ENCODE measurements at regions of chr2 and their contacts with region 1.

Region 1: DNA sequence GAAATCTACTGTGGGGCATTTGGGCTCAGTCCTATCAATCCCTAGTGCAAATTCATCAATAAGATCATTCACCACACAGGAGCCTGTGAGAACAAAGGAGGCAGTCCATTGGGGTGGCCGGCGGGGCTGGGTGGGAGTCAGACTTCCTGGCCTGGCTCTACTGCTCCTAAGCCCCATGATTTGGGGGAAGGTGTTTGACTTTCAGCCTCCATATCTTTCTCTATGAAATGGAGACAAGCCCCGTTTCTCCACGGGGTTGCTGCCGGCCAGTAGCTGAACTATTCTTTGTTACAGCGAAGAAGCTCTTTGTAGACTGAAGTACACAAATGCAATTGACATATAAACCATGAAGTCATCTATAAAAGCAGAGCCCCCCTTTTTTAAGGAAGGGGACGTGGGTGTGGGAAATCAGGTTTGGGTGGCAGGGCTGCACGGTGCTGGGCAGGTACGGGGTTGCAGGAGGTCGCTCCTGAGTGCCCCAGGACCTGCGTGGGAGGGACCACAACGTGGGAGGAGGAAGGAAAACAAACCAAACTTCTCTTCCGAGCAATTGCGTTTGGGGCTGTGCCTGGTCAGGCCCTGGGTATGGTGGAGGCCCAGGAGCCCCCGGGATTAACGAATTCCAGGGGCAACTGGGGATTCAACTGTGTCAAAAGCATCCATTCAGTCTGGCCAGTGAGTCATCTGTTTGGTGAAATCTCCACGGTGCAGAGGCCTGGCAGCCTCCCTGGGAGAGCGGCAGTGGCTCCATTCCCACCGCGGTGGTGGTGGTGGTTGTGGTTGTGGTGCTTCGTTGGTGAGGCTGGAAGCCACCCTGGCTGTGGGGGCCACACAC is 18.2 kb downstream of the FBLN7 start:
- DNase-seq: peak; percentile 69
- ATAC-seq: peak; percentile 47
- H3K4me3 Mint-ChIP-seq: peak overlapping the region; percentile 46
- H3K27ac Mint-ChIP-seq: peak overlapping the region; percentile 88
- H3K4me1 Mint-ChIP-seq: peaks cover 49% of the 10 kb centered on the region
- H3K27me3 Mint-ChIP-seq: no peaks in the 10 kb centered on the region

Region 2: GRCh38 chr2:111986116-111986900 is 170.1 kb before region 1 on chr2:
- CTCF ChIA-PET with region 1: no interaction called
- POLR2A ChIA-PET with region 1: no interaction called
- intact Hi-C with region 1: no loop called
- DNase-seq: no peak
- ATAC-seq: no peak
- H3K4me3 Mint-ChIP-seq: no peak overlapping the region
- H3K27ac Mint-ChIP-seq: no peak overlapping the region
- H3K4me1 Mint-ChIP-seq: peaks cover 15% of the 10 kb centered on the region
- H3K27me3 Mint-ChIP-seq: no peaks in the 10 kb centered on the region

Region 3: DNA sequence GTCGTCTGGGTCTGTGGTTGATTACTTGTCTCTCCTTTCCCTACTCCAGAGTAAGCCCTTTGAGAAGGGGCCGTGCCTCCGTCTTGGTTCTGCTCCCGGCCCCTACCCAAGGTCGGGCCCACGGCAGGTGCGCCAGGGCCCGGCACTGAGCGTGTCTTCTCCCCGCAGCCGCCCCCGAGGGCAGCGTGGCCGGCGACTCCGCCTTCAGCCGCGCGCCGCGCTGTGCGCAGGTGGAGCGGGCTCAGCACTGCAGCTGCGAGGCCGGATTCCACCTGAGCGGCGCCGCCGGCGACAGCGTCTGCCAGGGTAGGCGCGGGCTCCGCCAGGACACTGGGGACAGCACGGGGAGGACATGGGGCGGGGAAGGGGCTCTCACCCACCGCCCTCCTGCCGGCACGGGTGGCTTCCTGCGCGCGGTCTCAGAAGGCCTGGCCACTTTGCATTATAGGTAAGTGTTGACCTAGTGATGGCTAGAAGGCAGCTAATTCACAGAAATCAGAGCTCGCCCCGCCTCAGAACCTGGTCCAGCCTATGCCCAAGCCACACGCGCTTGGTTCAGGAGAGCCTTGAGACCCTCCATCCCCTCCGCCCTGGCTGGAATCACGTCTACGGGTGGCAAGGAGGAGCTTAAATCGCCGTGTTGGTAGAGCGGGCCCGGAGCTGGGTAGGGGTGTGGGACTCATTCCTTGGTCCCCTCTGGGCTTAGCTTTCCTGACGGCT is 25.4 kb after region 1 on chr2:
- CTCF ChIA-PET with region 1: no interaction called
- POLR2A ChIA-PET with region 1: no interaction called
- intact Hi-C with region 1: loop called (anchors 1 to 2 kb)
- DNase-seq: peak; percentile 84
- ATAC-seq: peak; percentile 67
- H3K4me3 Mint-ChIP-seq: peak overlapping the region; percentile 88
- H3K27ac Mint-ChIP-seq: peak overlapping the region; percentile 91
- H3K4me1 Mint-ChIP-seq: peaks cover 69% of the 10 kb centered on the region
- H3K27me3 Mint-ChIP-seq: no peaks in the 10 kb centered on the region

Region 4: GRCh38 chr2:112301171-112301584 is 144.8 kb after region 1 on chr2:
- CTCF ChIA-PET with region 1: no interaction called
- POLR2A ChIA-PET with region 1: no interaction called
- intact Hi-C with region 1: no loop called
- DNase-seq: no peak
- ATAC-seq: no peak
- H3K4me3 Mint-ChIP-seq: no peak overlapping the region
- H3K27ac Mint-ChIP-seq: no peak overlapping the region
- H3K4me1 Mint-ChIP-seq: peaks cover 10% of the 10 kb centered on the region
- H3K27me3 Mint-ChIP-seq: no peaks in the 10 kb centered on the region

Measured in activated CD4-positive, alpha-beta T cell treated with anti-CD3 and anti-CD28 coated beads for 36 hours (primary cell).